Activated T-helper 1 cell treated with anti-CD3 and anti-CD28 coated beads, Interleukin-12 subunit alpha, Interleukin-12 subunit beta, Interleukin-2, Interleukin-4 antibody, amounts not matched to agents 30 ng/mL and 10 ng/mL and 1 ng/mL, durations not matched to agents 14 hours and 24 hours and 36 hours (primary cell): ENCODE measurements at regions of chr13 and their contacts with region 1.

Region 1: GRCh38 chr13:48334534-48335127 is 31.1 kb downstream of the RB1 start:
- DNase-seq: no peak
- H3K4me3 Mint-ChIP-seq: no peak overlapping the region
- H3K27ac Mint-ChIP-seq: no peak overlapping the region
- H3K4me1 Mint-ChIP-seq: peaks cover 13% of the 10 kb centered on the region
- H3K27me3 Mint-ChIP-seq: no peaks in the 10 kb centered on the region

Region 2: DNA sequence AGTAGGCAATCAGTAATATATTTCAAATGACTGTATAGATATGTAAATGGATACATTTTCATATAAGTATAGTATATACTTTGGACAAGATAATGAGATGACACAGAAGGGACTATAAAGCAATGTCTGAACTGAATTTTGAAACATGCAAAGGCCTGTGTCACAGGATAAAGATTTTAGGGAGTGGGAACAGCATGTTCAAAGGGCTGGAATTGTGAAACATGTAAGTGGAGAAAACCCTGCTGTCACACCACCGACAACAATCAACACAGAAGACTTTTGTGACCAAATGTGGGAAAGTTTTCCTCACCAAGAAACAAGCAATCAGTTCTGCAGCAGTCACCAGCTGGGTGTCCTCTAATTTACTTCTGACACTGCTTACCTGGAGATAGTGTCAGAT is 35.4 kb after region 1 on chr13:
- intact Hi-C with region 1: no loop called
- DNase-seq: no peak
- H3K4me3 Mint-ChIP-seq: no peak overlapping the region
- H3K27ac Mint-ChIP-seq: no peak overlapping the region
- H3K4me1 Mint-ChIP-seq: no peaks in the 10 kb centered on the region
- H3K27me3 Mint-ChIP-seq: no peaks in the 10 kb centered on the region

Region 3: DNA sequence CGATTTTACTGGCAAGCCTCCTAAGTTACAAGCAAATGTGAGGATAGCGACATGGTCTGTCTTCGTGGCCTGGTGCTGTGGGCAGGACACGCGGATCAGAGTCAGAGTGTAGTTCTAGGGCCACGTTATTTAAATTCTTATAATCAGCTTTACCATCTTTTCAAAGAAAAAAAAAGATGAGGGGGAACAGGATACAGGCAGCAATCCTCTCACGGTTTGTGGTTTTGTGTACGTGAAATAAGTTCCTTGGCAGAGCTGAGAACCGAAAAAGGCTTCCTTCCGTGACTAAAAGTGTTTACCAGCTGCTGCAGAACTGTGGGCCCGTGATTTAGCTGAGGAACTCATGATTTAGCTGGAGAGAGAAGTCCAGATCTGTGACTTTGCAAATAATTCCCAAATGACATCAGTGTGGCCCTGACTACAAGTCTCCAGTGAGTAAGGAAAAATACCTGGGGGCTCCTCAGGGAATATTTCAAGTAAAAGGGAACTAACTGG is 171.0 kb after region 1 on chr13:
- intact Hi-C with region 1: loop called (anchors 5 kb)
- DNase-seq: peak; percentile 57
- H3K4me3 Mint-ChIP-seq: peak overlapping the region; percentile 38
- H3K27ac Mint-ChIP-seq: peak overlapping the region; percentile 62
- H3K4me1 Mint-ChIP-seq: peaks cover 68% of the 10 kb centered on the region
- H3K27me3 Mint-ChIP-seq: peaks cover 4% of the 10 kb centered on the region

Region 4: GRCh38 chr13:48580185-48580803 is 245.7 kb after region 1 on chr13:
- intact Hi-C with region 1: loop called (anchors 1 kb)
- DNase-seq: peak; percentile 44
- H3K4me3 Mint-ChIP-seq: no peak overlapping the region
- H3K27ac Mint-ChIP-seq: no peak overlapping the region
- H3K4me1 Mint-ChIP-seq: peaks cover 16% of the 10 kb centered on the region
- H3K27me3 Mint-ChIP-seq: peaks cover 63% of the 10 kb centered on the region

Region 5: GRCh38 chr13:48731957-48732569 is 397.4 kb after region 1 on chr13:
- intact Hi-C with region 1: loop called (anchors 1 kb)
- DNase-seq: peak; percentile 16
- H3K4me3 Mint-ChIP-seq: peak overlapping the region; percentile 63
- H3K27ac Mint-ChIP-seq: no peak overlapping the region
- H3K4me1 Mint-ChIP-seq: no peaks in the 10 kb centered on the region
- H3K27me3 Mint-ChIP-seq: peaks cover 3% of the 10 kb centered on the region